ENCODE measurements at regions of chr6 and their contacts with region 1.

Region 1: DNA sequence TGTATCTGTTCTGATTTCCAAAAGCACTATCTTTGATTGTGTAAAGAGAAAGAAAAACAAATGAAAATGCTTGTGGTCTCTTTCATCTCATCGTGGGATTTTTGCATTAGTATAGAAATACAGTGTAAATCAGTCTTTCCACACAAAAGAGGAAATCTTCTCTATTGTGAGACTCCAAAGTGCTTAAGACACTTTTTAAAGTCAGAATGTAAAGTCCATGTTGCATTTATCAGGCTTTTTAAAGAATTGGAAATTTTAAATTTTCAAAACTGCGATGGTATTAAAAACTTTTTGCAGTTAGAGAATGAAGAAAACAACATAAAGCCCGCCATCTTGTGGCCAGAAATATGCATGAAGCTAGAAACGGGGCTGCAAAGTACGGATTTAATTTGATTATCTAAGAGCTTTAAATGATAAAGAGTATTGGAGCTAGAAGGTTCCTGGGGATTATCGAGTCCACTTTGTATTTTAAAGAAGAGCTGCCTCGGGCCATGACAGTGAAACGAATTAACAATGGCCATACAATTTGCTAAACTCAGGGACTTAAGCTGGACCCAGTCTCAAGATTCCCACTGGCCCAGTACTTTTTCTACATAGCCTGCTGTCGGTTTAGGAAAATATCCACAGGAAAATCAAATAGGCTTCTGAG is 339.6 kb downstream of the ARHGAP18 start:
- DNase-seq: peak; percentile 57
- ATAC-seq: peak; percentile 72
- H3K4me3 ChIP-seq: no peak overlapping the region
- H3K27ac ChIP-seq: no peak overlapping the region
- H3K4me1 ChIP-seq: no peaks in the 10 kb centered on the region
- H3K27me3 ChIP-seq: peaks cover 4% of the 10 kb centered on the region; the same call in 1 of the 2 replicates
- CTCF ChIP-seq: peak; percentile 73
- POLR2A ChIP-seq: no peak
- RAD21 ChIP-seq: peak; percentile 78

Region 2: DNA sequence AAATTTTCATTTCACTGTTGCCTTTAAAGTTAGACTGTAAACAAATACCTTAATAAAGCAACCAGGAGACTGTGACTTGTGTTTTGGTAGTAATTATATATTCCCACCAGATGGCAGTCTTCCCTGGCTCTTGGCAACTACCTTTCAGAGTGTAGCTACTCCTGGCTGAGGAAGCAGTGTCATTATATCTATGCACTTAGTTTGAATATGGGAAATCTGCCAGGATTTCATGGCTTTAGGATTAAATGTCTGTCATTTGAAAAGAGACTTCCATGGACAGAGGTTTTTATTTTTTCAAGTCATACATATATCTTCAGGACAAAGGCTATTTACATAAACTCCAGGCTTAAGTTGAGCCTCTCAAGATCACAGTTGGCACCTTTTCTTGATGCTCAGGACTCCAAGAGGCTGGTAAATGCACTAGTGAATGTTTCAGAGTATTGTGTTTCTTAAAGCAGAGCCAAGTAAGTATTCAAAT is 1633.3 kb before region 1 on chr6:
- CTCF ChIA-PET with region 1: interaction called, 4 read pairs
- POLR2A ChIA-PET with region 1: no interaction called
- dilution Hi-C with region 1: no loop called
- in situ Hi-C with region 1: no loop called
- intact Hi-C with region 1: loop called (anchors 5 kb)
- DNase-seq: peak; percentile 73
- ATAC-seq: peak; percentile 92
- H3K4me3 ChIP-seq: no peak overlapping the region
- H3K27ac ChIP-seq: no peak overlapping the region
- H3K4me1 ChIP-seq: 0 out of 2 replicates have a peak, but pooled peaks cover 2% of the 10 kb centered on the region
- H3K27me3 ChIP-seq: no peaks in the 10 kb centered on the region
- CTCF ChIP-seq: peak; percentile 74
- POLR2A ChIP-seq: no peak
- RAD21 ChIP-seq: peak; percentile 95

Region 3: GRCh38 chr6:128725271-128726233 is 644.8 kb before region 1 on chr6:
- CTCF ChIA-PET with region 1: no interaction called
- POLR2A ChIA-PET with region 1: no interaction called
- dilution Hi-C with region 1: no loop called
- in situ Hi-C with region 1: no loop called
- intact Hi-C with region 1: loop called (anchors 1 kb)
- DNase-seq: peak; percentile 38
- ATAC-seq: no peak
- H3K4me3 ChIP-seq: no peak overlapping the region
- H3K27ac ChIP-seq: no peak overlapping the region
- H3K4me1 ChIP-seq: peaks cover 1% of the 10 kb centered on the region; the same call in 1 of the 2 replicates
- H3K27me3 ChIP-seq: no peaks in the 10 kb centered on the region; the same call in 1 of the 2 replicates
- CTCF ChIP-seq: peak; percentile 55
- POLR2A ChIP-seq: no peak
- RAD21 ChIP-seq: no peak; the same call in 1 of the 2 replicates

Region 4: GRCh38 chr6:128807577-128807976 is 562.8 kb before region 1 on chr6:
- CTCF ChIA-PET with region 1: interaction called, 4 read pairs
- POLR2A ChIA-PET with region 1: no interaction called
- dilution Hi-C with region 1: no loop called
- in situ Hi-C with region 1: loop called (anchors 10 kb)
- intact Hi-C with region 1: loop called (anchors 1 kb)
- DNase-seq: peak; percentile 60
- ATAC-seq: peak; percentile 59
- H3K4me3 ChIP-seq: no peak overlapping the region
- H3K27ac ChIP-seq: no peak overlapping the region
- H3K4me1 ChIP-seq: peaks cover 2% of the 10 kb centered on the region
- H3K27me3 ChIP-seq: peaks cover 2% of the 10 kb centered on the region; the same call in 1 of the 2 replicates
- CTCF ChIP-seq: peak; percentile 61
- POLR2A ChIP-seq: no peak
- RAD21 ChIP-seq: peak; percentile 69

Region 5: DNA sequence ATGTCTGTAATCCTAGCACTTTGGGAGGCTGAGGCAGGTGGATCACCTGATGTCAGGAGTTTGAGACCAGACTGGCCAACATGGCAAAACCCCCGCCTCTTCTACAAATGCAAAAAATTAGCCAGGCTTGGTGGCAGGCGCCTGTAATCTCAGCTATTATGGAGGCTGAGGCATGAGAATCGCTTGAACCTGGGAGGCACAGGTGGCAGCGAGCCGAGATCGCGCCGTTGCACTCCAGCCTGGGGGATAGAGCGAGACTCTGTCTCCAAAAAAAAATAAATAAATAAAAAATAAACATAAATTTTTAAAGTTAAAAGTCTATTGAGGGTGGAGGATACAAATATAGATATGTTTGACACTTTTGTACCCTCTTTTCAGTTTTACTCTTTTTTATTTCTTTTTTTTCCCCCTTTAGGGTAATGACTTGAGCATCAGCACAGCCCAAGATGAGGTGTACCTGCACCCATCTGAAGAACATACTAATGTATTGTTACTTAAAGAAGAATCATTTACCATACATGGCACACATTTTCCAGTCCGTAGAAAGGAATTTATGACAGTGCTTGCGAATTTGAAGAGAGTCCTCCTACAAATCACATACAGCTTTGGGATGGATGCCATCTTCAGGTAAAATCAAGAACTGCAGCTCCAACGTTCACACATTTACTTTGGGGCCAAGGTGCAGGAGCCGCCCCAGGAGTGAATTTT is 118.6 kb before region 1 on chr6:
- CTCF ChIA-PET with region 1: no interaction called
- POLR2A ChIA-PET with region 1: no interaction called
- dilution Hi-C with region 1: no loop called
- in situ Hi-C with region 1: no loop called
- intact Hi-C with region 1: loop called (anchors 1 kb)
- DNase-seq: peak; percentile 75
- ATAC-seq: peak; percentile 81
- H3K4me3 ChIP-seq: no peak overlapping the region
- H3K27ac ChIP-seq: no peak overlapping the region
- H3K4me1 ChIP-seq: no peaks in the 10 kb centered on the region; the same call in 1 of the 2 replicates
- H3K27me3 ChIP-seq: no peaks in the 10 kb centered on the region
- CTCF ChIP-seq: peak; percentile 80
- POLR2A ChIP-seq: no peak
- RAD21 ChIP-seq: peak; percentile 89

Region 6: DNA sequence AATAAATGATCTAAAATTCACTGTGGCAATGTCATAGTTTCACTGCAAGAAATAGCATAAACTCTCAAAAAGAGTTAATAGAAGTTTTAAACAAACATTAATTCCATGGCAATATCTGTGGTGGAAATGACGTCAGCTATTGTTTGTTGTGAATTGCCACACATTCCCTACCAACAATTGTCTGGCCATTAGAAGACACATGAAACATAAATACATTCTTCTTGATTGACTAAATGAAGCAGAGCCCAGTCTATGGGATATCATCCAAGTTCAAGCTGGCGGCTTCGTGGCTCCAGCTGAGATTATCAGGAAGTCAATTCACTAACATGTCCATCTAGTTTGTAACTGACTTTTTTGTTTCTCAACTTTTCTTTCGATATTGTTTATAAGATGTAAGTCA is 29.4 kb before region 1 on chr6:
- CTCF ChIA-PET with region 1: no interaction called
- POLR2A ChIA-PET with region 1: no interaction called
- dilution Hi-C with region 1: no loop called
- in situ Hi-C with region 1: no loop called
- intact Hi-C with region 1: no loop called
- DNase-seq: peak; percentile 96
- ATAC-seq: peak; percentile 68
- H3K4me3 ChIP-seq: no peak overlapping the region
- H3K27ac ChIP-seq: no peak overlapping the region; the same call in 1 of the 2 replicates
- H3K4me1 ChIP-seq: peaks cover 2% of the 10 kb centered on the region; the same call in 1 of the 2 replicates
- H3K27me3 ChIP-seq: no peaks in the 10 kb centered on the region
- CTCF ChIP-seq: no peak
- POLR2A ChIP-seq: no peak
- RAD21 ChIP-seq: no peak

Region 7: DNA sequence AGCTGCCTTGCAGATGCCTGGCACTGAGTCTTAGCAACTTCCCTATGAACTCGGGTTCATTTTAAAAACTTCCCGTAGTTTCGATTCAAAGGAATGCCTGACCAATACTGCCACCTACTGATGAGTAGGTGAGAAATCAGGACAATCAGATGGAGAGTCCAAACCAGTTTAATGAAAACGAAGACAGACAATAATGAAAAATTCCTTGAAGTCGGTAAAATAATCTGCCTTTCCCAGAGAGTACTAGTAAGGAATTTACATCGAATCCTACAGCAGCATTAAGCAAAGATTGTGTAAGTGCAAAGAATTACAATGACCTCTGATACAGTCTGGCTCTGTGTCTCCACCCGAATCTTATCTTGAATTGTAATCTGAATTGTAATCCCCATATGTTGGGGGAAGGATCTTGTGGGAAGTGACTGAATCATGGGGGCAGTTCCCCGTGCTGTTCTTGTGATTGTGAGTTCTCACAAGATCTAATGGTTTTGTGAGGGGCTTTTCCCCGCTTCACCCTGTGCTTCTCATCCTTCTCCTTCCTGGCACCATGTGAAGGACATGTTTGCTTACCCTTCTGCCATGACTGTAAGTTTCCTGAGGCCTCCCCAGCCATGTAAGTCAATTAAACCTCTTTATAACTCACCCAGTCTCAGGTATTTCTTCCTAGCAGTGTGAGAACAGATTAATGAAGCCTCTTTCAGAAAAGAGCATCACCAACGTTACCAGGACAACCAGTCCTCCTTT is 205.2 kb after region 1 on chr6:
- CTCF ChIA-PET with region 1: no interaction called
- POLR2A ChIA-PET with region 1: no interaction called
- dilution Hi-C with region 1: no loop called
- in situ Hi-C with region 1: no loop called
- intact Hi-C with region 1: loop called (anchors 2 kb)
- DNase-seq: peak; percentile 72
- ATAC-seq: peak; percentile 92
- H3K4me3 ChIP-seq: peak overlapping the region; percentile 22; the same call in 1 of the 2 replicates
- H3K27ac ChIP-seq: no peak overlapping the region
- H3K4me1 ChIP-seq: peaks cover 2% of the 10 kb centered on the region; the same call in 1 of the 2 replicates
- H3K27me3 ChIP-seq: no peaks in the 10 kb centered on the region
- CTCF ChIP-seq: peak; percentile 76
- POLR2A ChIP-seq: no peak
- RAD21 ChIP-seq: peak; percentile 89

Measured in IMR-90 (cell line).